B cell (primary cell): ENCODE measurements at regions of chr4 and their contacts with region 1.

Region 1: GRCh38 chr4:1693129-1693896 is 9.2 kb upstream of the FAM53A start:
- DNase-seq: peak; percentile 87
- ATAC-seq: peak; percentile 96
- H3K4me3 ChIP-seq: no peak overlapping the region
- H3K4me3 Mint-ChIP-seq: no peak overlapping the region
- H3K27ac ChIP-seq: no peak overlapping the region
- H3K27ac Mint-ChIP-seq: peak overlapping the region; percentile 53
- H3K4me1 ChIP-seq: no peaks in the 10 kb centered on the region
- H3K4me1 Mint-ChIP-seq: peaks cover 4% of the 10 kb centered on the region
- H3K27me3 ChIP-seq: no peaks in the 10 kb centered on the region
- H3K27me3 Mint-ChIP-seq: no peaks in the 10 kb centered on the region
- CTCF ChIP-seq: peak; percentile 93

Region 2: DNA sequence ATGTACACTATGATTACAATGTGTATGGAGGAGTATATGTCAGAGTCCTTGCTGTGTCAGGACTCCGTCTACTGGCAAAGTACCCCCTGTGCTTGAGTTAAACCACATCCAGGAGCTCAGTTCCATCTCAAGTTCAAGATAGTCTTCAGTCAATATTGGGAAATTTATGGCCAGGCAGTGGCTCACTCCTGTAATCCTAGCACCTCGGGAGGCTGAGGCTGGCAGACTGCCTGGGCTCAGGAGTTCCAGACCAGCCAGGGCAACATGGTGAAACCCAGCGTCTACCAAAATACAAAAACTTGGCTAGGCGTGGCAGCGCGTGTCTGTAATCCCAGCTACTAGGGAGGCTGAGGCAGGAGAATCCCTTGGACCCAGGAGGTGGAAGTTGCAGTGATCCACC is 13.0 kb after region 1 on chr4:
- CTCF ChIA-PET with region 1: interaction called, 75 read pairs
- POLR2A ChIA-PET with region 1: interaction called, 12 read pairs
- intact Hi-C with region 1: no loop called
- DNase-seq: no peak
- ATAC-seq: no peak
- H3K4me3 ChIP-seq: no peak overlapping the region
- H3K4me3 Mint-ChIP-seq: no peak overlapping the region
- H3K27ac ChIP-seq: no peak overlapping the region
- H3K27ac Mint-ChIP-seq: no peak overlapping the region
- H3K4me1 ChIP-seq: peaks cover 13 to 16% of the 10 kb centered on the region in 2 donors
- H3K4me1 Mint-ChIP-seq: peaks cover 32% of the 10 kb centered on the region
- H3K27me3 ChIP-seq: no peaks in the 10 kb centered on the region
- H3K27me3 Mint-ChIP-seq: no peaks in the 10 kb centered on the region
- CTCF ChIP-seq: no peak

Region 3: DNA sequence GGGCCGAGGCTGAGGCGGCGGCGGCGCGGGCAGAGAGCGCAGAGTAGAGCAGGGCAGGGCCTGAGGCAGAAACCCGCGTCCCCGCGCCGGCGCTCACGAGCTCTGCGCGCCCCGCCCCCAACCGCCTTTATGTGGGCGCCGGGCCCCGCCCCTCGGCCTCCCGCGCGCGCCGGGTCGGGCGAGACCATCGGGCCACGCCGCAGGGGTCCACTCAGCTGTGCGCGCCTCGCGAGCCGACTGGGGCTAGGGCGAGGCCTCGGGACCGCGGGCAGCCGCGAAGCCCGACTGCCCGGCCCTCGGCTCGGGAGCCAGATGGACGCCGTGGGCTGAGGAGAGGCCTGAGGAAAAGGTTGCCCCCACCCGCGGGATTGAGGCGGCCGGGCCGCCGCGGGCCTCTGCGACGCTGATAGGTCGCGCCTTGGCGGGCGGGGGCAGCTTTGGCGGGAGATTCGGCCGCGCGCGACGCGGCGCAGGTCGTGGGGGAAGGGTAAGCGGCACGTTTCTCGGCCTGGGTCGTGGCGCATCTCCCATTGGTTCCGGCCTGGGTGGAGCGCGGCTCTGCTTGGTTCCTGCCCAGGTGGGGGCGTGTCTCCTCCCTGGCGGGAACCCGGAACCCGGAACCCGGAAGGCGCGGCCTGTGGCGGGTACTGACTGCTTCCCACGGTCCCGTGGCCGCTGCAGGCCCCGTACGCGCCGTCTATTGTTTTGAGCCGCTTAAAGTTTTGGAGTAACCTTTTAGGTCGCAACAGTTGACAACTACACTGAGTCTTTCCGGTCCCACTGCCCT is 19.1 kb after region 1 on chr4 and contains the start of gene SLBP:
- CTCF ChIA-PET with region 1: interaction called, 503 read pairs
- POLR2A ChIA-PET with region 1: interaction called, 12 read pairs
- intact Hi-C with region 1: loop called (anchors 1 kb)
- DNase-seq: peak; percentile 99
- ATAC-seq: peak; percentile 86
- H3K4me3 ChIP-seq: peak within 1 kb of the TSS; percentile 78 to 100 (median 96)
- H3K4me3 Mint-ChIP-seq: peak within 1 kb of the TSS; percentile 91
- H3K27ac ChIP-seq: peak within 1 kb of the TSS; percentile 83 to 99
- H3K27ac Mint-ChIP-seq: peak within 1 kb of the TSS; percentile 98
- H3K4me1 ChIP-seq: peaks cover 52 to 60% of the 10 kb centered on the region in 2 donors
- H3K4me1 Mint-ChIP-seq: peaks cover 66% of the 10 kb centered on the region
- H3K27me3 ChIP-seq: no peaks in the 10 kb centered on the region
- H3K27me3 Mint-ChIP-seq: no peaks in the 10 kb centered on the region
- CTCF ChIP-seq: no peak
- total RNA-seq, gene SLBP: 31.8 and 33.9 TPM in 2 replicates

Region 4: GRCh38 chr4:1721004-1721665 is 27.8 kb after region 1 on chr4 and contains the starts of genes TACC3 and TMEM129:
- CTCF ChIA-PET with region 1: interaction called, 503 read pairs
- POLR2A ChIA-PET with region 1: interaction called, 7 read pairs
- intact Hi-C with region 1: loop called (anchors 1 kb)
- DNase-seq: peak; percentile 98
- ATAC-seq: peak; percentile 81
- H3K4me3 ChIP-seq: peak within 1 kb of the TSS; percentile 41 to 69 (median 60)
- H3K4me3 Mint-ChIP-seq: peak within 1 kb of the TSS; percentile 93
- H3K27ac ChIP-seq: peak within 1 kb of the TSS; percentile 89 to 96
- H3K27ac Mint-ChIP-seq: peak within 1 kb of the TSS; percentile 98
- H3K4me1 ChIP-seq: peaks cover 59 to 84% of the 10 kb centered on the region in 2 donors
- H3K4me1 Mint-ChIP-seq: peaks cover 65% of the 10 kb centered on the region
- H3K27me3 ChIP-seq: no peaks in the 10 kb centered on the region
- H3K27me3 Mint-ChIP-seq: no peaks in the 10 kb centered on the region
- CTCF ChIP-seq: no peak
- total RNA-seq, gene TACC3: 47.9 and 54.5 TPM in 2 replicates
- total RNA-seq, gene TMEM129: 41.0 and 41.9 TPM in 2 replicates

Region 5: DNA sequence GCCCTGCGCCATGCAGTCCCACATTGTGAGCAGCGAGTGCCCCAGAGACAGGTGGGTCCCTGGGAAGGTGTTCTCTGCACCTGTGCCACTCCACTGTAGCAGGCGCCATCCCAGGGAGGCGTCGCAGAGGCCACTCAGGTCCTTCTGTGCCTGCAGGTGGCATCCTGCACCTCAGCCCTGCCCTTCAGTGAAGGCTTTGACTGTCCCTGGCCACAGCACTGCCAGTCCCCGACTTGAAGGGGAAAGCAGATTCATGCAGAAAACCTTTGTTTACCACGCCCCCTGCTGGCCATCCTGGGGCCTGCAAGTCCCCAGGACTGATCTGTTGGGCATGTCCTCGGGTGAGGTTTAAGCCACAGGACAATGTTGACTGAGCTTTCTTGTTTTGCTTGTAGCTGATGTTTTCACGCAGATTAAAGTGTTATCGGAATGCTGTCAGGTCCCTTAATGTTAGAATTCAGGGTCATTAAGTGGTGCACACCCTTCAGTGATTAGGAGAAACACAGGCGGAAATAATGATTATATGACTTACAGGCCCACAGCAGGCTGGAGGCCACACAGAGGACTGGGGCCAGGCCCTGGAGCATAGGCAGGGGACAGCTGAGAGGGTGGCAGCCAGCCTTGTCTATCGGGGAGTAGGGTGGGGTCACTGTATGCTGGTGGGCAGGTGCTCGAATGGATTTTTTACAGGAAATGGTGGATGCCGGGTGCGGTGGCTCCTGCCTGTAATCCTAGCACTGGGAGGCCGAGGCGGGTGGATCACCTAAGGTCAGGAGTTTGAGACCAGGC is 33.0 kb after region 1 on chr4:
- CTCF ChIA-PET with region 1: interaction called, 503 read pairs
- POLR2A ChIA-PET with region 1: interaction called, 7 read pairs
- intact Hi-C with region 1: loop called (anchors 1 kb)
- DNase-seq: peak; percentile 89
- ATAC-seq: peak; percentile 25
- H3K4me3 ChIP-seq: no peak overlapping the region
- H3K4me3 Mint-ChIP-seq: peak overlapping the region; percentile 53
- H3K27ac ChIP-seq: peak overlapping the region in 1 of 2 donors; percentile 57
- H3K27ac Mint-ChIP-seq: peak overlapping the region; percentile 79
- H3K4me1 ChIP-seq: peaks cover 45 to 51% of the 10 kb centered on the region in 2 donors
- H3K4me1 Mint-ChIP-seq: peaks cover 40% of the 10 kb centered on the region
- H3K27me3 ChIP-seq: no peaks in the 10 kb centered on the region
- H3K27me3 Mint-ChIP-seq: no peaks in the 10 kb centered on the region
- CTCF ChIP-seq: peak; percentile 90

Region 6: GRCh38 chr4:1809754-1810511 is 116.6 kb after region 1 on chr4:
- CTCF ChIA-PET with region 1: interaction called, 19 read pairs
- POLR2A ChIA-PET with region 1: no interaction called
- intact Hi-C with region 1: no loop called
- DNase-seq: peak; percentile 74
- ATAC-seq: peak; percentile 60
- H3K4me3 ChIP-seq: no peak overlapping the region
- H3K4me3 Mint-ChIP-seq: no peak overlapping the region
- H3K27ac ChIP-seq: no peak overlapping the region
- H3K27ac Mint-ChIP-seq: no peak overlapping the region
- H3K4me1 ChIP-seq: no peaks in the 10 kb centered on the region
- H3K4me1 Mint-ChIP-seq: no peaks in the 10 kb centered on the region
- H3K27me3 ChIP-seq: no peaks in the 10 kb centered on the region
- H3K27me3 Mint-ChIP-seq: no peaks in the 10 kb centered on the region
- CTCF ChIP-seq: peak; percentile 83